T-cell (primary cell): ENCODE measurements at regions of chr3 and their contacts with region 1.

Region 1: GRCh38 chr3:127789046-127789838 is 33.1 kb downstream of the MGLL start:
- DNase-seq: no peak
- ATAC-seq: no peak
- H3K4me3 ChIP-seq: no peak overlapping the region
- H3K4me3 Mint-ChIP-seq: no peak overlapping the region
- H3K27ac ChIP-seq: no peak overlapping the region
- H3K27ac Mint-ChIP-seq: no peak overlapping the region
- H3K4me1 ChIP-seq: peaks cover 3 to 5% of the 10 kb centered on the region in 2 experiments
- H3K4me1 Mint-ChIP-seq: peaks cover 2 to 13% (median 3%) of the 10 kb centered on the region in 3 donors
- H3K27me3 ChIP-seq: peaks cover 0 to 30% of the 10 kb centered on the region in 2 experiments
- H3K27me3 Mint-ChIP-seq: peaks cover under 1 to 23% of the 10 kb centered on the region in 2 donors

Region 2: GRCh38 chr3:127858937-127859336 is 69.7 kb after region 1 on chr3:
- CTCF ChIA-PET with region 1: no interaction called
- POLR2A ChIA-PET with region 1: interaction called in 1 of 2 experiments, 11 read pairs
- DNase-seq: no peak
- ATAC-seq: no peak
- H3K4me3 ChIP-seq: no peak overlapping the region
- H3K4me3 Mint-ChIP-seq: no peak overlapping the region
- H3K27ac ChIP-seq: no peak overlapping the region
- H3K27ac Mint-ChIP-seq: no peak overlapping the region
- H3K4me1 ChIP-seq: no peaks in the 10 kb centered on the region
- H3K4me1 Mint-ChIP-seq: peaks cover 0 to 3% (median 2%) of the 10 kb centered on the region in 3 donors
- H3K27me3 ChIP-seq: peaks cover 0 to 9% of the 10 kb centered on the region in 2 experiments
- H3K27me3 Mint-ChIP-seq: no peaks in the 10 kb centered on the region